CD4-positive, alpha-beta T cell (primary cell): ENCODE measurements at regions of chr14 and their contacts with region 1.

Region 1: DNA sequence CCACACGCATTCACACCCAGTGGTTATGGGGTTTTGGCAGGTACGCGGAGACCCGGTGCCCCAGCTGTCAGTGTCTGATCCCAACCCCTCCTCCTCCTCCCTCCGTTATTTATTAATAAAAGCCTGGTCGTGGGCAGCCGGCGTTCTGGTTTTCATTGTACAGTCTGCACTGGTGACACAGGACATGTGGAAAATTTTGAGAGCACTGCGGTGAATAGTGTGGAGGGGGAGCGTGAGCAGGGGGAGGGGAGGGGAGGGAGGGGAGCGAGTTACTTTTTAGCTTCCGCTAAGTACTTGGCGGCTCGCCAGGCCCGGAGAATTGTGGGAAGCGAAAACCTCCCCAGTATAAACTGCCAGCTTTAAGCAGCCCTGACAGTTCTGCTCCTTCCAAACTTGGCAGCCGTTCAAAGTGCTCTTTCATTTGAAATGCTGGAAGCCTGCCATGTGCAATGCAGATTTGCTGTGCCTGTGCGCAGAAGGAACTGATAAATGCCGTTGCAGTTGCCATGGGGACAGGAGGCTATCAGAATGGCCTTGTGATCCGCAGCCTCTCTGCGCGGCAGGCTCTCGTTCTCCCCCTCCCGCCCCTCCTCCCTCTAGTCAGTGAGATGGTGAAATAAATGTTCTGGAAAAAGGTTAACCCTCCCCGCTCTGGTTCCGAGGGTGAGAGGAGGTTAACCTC is 11.7 kb upstream of the IRF2BPL start:
- DNase-seq: peak; percentile 96 to 100 (median 99)
- ATAC-seq: peak; percentile 79
- H3K4me3 ChIP-seq: peak overlapping the region; percentile 46
- H3K4me3 Mint-ChIP-seq: peak overlapping the region; percentile 84
- H3K27ac ChIP-seq: peak overlapping the region; percentile 93 to 96
- H3K27ac Mint-ChIP-seq: peak overlapping the region; percentile 100
- H3K4me1 ChIP-seq: peaks cover 86% of the 10 kb centered on the region
- H3K4me1 Mint-ChIP-seq: peaks cover 96% of the 10 kb centered on the region
- H3K27me3 ChIP-seq: no peaks in the 10 kb centered on the region
- H3K27me3 Mint-ChIP-seq: no peaks in the 10 kb centered on the region
- CTCF ChIP-seq: no peak

Region 2: GRCh38 chr14:76929927-76930326 is 110.3 kb before region 1 on chr14:
- CTCF ChIA-PET with region 1: no interaction called
- POLR2A ChIA-PET with region 1: interaction called, 10 read pairs
- intact Hi-C with region 1: no loop called
- DNase-seq: peak; percentile 40 to 92 (median 60)
- ATAC-seq: peak; percentile 84
- H3K4me3 ChIP-seq: peak overlapping the region; percentile 20
- H3K4me3 Mint-ChIP-seq: peak overlapping the region; percentile 68
- H3K27ac ChIP-seq: peak overlapping the region; percentile 43 to 52
- H3K27ac Mint-ChIP-seq: peak overlapping the region; percentile 86
- H3K4me1 ChIP-seq: peaks cover 78% of the 10 kb centered on the region
- H3K4me1 Mint-ChIP-seq: peaks cover 75% of the 10 kb centered on the region
- H3K27me3 ChIP-seq: no peaks in the 10 kb centered on the region
- H3K27me3 Mint-ChIP-seq: no peaks in the 10 kb centered on the region
- CTCF ChIP-seq: no peak

Region 3: GRCh38 chr14:77023001-77023996 is 16.9 kb before region 1 on chr14:
- CTCF ChIA-PET with region 1: interaction called, 9 read pairs
- POLR2A ChIA-PET with region 1: interaction called, 220 read pairs
- intact Hi-C with region 1: loop called in 1 of 2 experiments (anchors 1 kb)
- DNase-seq: peak in 1 of 14 experiments; percentile 33
- ATAC-seq: no peak
- H3K4me3 ChIP-seq: no peak overlapping the region
- H3K4me3 Mint-ChIP-seq: peak overlapping the region; percentile 69
- H3K27ac ChIP-seq: no peak overlapping the region
- H3K27ac Mint-ChIP-seq: peak overlapping the region; percentile 90
- H3K4me1 ChIP-seq: peaks cover 54% of the 10 kb centered on the region
- H3K4me1 Mint-ChIP-seq: peaks cover 36% of the 10 kb centered on the region
- H3K27me3 ChIP-seq: no peaks in the 10 kb centered on the region
- H3K27me3 Mint-ChIP-seq: no peaks in the 10 kb centered on the region
- CTCF ChIP-seq: no peak

Region 4: DNA sequence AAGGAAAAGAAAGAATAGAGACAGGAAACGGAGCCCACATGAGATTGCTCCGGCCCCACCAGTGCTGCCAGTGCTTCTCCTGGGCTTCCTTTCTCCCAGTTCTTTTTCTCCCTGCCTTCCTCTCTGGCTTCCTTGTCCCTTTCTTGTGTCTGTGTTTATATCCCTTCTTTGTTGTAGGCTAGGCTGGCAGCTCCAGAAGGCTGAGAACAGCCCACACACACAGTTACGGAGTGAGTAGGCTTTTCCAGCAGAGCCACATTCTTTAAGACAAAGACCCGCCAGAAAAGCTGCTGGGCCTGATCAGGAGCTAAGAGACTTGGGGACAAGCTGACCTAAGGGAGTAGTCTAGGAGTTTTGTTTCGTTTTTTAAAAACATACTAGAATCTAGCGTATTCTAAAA is 70.8 kb after region 1 on chr14:
- CTCF ChIA-PET with region 1: no interaction called
- POLR2A ChIA-PET with region 1: no interaction called
- intact Hi-C with region 1: no loop called
- DNase-seq: no peak
- ATAC-seq: no peak
- H3K4me3 ChIP-seq: no peak overlapping the region
- H3K4me3 Mint-ChIP-seq: no peak overlapping the region
- H3K27ac ChIP-seq: no peak overlapping the region
- H3K27ac Mint-ChIP-seq: no peak overlapping the region
- H3K4me1 ChIP-seq: no peaks in the 10 kb centered on the region
- H3K4me1 Mint-ChIP-seq: no peaks in the 10 kb centered on the region
- H3K27me3 ChIP-seq: no peaks in the 10 kb centered on the region
- H3K27me3 Mint-ChIP-seq: no peaks in the 10 kb centered on the region
- CTCF ChIP-seq: no peak